Activated CD4-positive, alpha-beta T cell treated with anti-CD3 and anti-CD28 coated beads, Interleukin-2, amount 10 ng/mL, durations not matched to agents 24 days and 14 days (primary cell): ENCODE measurements at regions of chr22 and their contacts with region 1.

Region 1: GRCh38 chr22:29072193-29072978 is 449 bp upstream of the KREMEN1 start:
- DNase-seq: peak; percentile 94
- H3K4me3 Mint-ChIP-seq: peak overlapping the region; percentile 72
- H3K27ac Mint-ChIP-seq: no peak overlapping the region
- H3K4me1 Mint-ChIP-seq: peaks cover 18% of the 10 kb centered on the region
- H3K27me3 Mint-ChIP-seq: peaks cover 65% of the 10 kb centered on the region

Region 2: DNA sequence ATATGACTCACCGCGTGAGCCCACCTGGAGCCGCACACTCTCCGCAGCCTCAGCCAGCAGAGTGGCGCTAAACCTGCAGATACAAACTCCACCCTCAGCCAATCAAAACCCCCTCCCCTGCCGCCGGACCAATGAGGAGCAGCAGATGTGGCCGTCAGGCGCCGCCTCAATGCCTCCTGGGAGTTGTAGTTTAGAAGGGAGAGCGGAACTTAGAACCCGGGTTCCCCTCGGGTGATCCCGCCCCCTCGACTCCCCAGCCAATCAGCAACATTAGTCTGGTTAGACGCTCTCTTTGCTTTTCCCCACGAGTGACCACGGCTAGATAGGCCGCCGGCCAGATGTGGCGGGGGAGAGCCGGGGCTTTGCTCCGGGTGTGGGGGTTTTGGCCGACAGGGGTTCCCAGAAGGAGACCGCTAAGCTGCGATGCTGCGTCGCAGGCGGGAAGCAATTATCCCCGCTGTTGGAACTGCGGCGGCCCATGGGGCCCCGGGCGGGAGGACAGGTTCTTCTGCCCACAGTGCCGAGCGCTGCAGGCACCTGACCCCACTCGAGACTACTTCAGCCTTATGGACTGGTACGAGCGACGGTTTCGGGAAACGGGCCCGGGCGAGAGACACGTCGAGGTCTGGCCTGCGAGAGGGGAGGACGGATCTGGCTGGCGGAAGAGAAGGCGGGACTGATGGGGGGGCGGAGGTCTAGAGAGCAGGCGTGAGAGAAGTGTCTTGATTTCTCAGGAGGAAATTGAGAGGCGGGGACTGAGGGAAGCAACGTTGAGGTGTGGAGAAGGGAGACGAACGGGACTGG is 330.4 kb before region 1 on chr22 and contains the starts of genes CHEK2 and HSCB:
- intact Hi-C with region 1: loop called (anchors 1 kb)
- DNase-seq: peak; percentile 99
- H3K4me3 Mint-ChIP-seq: peak within 1 kb of the TSS; percentile 92
- H3K27ac Mint-ChIP-seq: peak within 1 kb of the TSS; percentile 86
- H3K4me1 Mint-ChIP-seq: peaks cover 25% of the 10 kb centered on the region
- H3K27me3 Mint-ChIP-seq: no peaks in the 10 kb centered on the region
- total RNA-seq, gene CHEK2: 29.8 and 32.7 TPM in 2 replicates
- total RNA-seq, gene HSCB: 12.8 and 14.1 TPM in 2 replicates

Region 3: DNA sequence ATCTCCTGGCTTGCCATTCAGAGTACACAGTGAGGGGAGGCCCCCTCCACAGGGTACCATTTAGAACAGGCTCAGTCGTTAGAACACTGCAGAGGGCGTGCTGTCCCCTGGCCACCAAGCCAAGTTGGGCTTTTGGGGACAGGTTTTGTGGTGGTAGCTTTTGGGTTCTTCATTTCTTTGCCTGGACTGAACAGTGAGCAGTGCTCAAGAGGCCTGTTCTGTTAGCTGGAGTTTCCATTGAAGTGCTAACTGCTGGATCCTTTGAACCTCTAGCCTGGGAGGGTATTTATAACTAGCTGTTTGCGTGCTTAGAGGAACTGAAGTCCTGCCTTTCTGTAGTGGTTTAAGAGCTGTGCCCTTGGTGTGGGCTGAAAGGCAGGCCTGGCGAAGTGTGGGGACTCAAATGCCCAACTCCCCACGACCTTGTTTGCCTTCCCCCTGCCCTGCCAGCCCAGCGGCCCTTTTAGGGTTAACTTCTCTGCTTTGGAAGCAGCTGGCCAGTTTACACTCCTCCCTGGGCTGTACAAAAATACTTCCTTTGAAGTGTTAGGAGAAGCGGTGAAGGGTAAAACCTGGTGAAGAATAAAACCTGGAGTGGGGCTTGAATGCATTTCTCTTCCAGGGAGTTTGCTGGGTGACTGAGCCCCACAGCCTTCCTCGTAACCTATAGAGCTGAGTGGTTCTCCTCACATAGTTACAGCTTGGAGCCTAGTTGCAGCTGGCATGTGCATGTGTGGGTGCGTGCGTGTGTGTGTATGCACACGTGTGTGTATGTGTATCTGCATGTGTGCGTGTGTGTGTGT is 154.4 kb before region 1 on chr22:
- intact Hi-C with region 1: no loop called
- DNase-seq: no peak
- H3K4me3 Mint-ChIP-seq: no peak overlapping the region
- H3K27ac Mint-ChIP-seq: no peak overlapping the region
- H3K4me1 Mint-ChIP-seq: no peaks in the 10 kb centered on the region
- H3K27me3 Mint-ChIP-seq: peaks cover 76% of the 10 kb centered on the region

Region 4: GRCh38 chr22:29096736-29097669 is 24.6 kb after region 1 on chr22:
- intact Hi-C with region 1: no loop called
- DNase-seq: no peak
- H3K4me3 Mint-ChIP-seq: no peak overlapping the region
- H3K27ac Mint-ChIP-seq: no peak overlapping the region
- H3K4me1 Mint-ChIP-seq: no peaks in the 10 kb centered on the region
- H3K27me3 Mint-ChIP-seq: peaks cover 15% of the 10 kb centered on the region